H1 (cell line): ENCODE measurements at regions of chr14 and their contacts with region 1.

Region 1: GRCh38 chr14:77023001-77023996 is 5.2 kb downstream of the IRF2BPL start:
- DNase-seq: peak in 1 of 2 experiments; percentile 51
- H3K4me3 ChIP-seq: peak overlapping the region in 1 of 4 experiments; percentile 86; a peak in 4 of 8 replicates
- H3K27ac ChIP-seq: peak overlapping the region; percentile 35; the same call in 1 of the 2 replicates
- H3K4me1 ChIP-seq: peaks cover 12 to 26% (median 19%) of the 10 kb centered on the region in 4 experiments
- H3K27me3 ChIP-seq: peaks cover 0 to 5% (median 3%) of the 10 kb centered on the region in 4 experiments; a peak in 5 of 7 replicates
- CTCF ChIP-seq: peak in 2 of 3 experiments; percentile 18 to 42; a peak in 3 of 4 replicates
- EP300 ChIP-seq: no peak
- POLR2A ChIP-seq: no peak; a peak in 1 of 3 replicates
- RAD21 ChIP-seq: peak; percentile 47 to 53

Region 2: DNA sequence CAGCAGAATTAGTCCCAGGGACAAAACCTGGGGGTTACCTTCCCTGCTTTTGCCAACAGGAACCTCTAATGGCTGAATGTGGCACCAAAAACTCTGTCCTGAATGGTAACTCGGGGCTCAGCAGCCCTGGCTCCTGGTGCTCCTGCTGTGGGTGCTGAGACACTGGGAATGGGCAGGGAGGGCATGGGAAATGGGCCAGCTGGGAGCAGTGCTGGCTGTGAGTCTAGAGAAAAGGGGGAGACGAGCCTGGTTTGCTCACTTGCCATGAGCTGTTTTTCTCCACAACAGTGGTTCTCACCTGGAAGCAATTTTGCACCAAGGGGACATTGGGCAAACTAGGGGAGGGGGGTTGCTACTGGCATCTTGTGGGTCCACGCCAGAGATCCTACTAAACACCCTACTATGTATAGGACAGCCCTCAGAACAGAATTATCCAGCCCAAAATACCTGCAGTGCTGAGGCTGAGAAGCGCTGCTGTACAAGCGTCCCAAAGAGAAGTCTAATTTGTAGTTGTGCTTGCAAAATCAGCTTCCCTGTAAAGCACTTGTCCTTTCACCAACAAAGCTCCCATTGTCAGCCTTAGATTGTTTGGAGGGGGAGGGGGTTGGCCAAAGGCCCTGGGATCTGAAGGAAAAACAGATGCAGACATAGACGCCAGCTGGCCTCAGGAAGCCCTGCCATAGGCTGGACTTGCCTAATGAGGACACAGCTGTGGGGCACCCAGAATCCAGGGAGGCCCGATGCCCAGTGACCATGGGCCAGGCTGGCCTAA is 193.5 kb before region 1 on chr14:
- CTCF ChIA-PET with region 1: no interaction called
- POLR2A ChIA-PET with region 1: no interaction called
- DNase-seq: no peak
- H3K4me3 ChIP-seq: no peak overlapping the region
- H3K27ac ChIP-seq: no peak overlapping the region
- H3K4me1 ChIP-seq: peaks cover 3 to 22% (median 10%) of the 10 kb centered on the region in 4 experiments
- H3K27me3 ChIP-seq: no peaks in the 10 kb centered on the region
- CTCF ChIP-seq: no peak
- EP300 ChIP-seq: no peak
- POLR2A ChIP-seq: no peak
- RAD21 ChIP-seq: no peak

Region 3: DNA sequence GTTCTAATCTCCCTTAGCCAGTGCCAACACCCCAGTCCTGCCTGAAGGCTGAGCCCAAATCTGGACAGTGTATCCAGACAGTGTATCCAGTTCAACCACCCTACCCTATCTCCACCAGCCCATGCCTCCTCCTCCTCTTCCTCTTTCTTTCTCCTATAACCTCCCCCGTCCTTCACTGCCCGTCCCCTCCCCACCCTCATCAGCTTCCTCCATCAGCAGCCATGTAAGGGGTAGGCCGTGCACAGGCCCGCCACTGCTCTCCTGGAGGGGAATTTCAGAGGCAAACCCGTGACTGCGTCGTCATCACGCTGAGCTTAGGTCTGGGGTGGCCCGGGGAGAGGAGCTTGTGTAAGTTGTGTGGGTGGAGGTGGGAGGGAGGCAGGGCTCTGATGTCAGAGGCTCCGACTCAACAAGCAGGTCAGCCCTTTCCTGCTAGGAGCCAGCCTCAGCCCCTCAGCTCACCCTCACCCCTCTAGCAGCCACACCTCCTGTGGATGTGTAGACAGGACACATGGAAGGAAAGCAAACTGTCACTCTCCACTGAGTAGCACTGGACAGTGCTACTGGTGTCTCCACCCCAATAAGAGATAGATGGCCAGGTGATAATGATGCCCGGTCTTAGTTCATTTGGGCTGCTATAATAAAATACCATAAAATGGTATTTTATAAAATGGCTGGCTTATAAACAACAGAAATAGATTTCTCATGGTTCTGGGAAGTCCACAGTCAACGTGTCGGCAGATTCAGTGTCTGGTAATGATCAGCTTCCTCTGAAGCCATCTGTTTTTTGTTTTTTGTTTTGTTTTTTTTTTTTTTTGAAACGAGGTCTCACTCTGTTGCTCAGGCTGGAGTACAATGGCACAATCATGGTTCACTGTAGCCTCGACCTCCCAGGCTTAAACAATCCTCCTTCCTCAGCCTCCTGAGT is 45.2 kb before region 1 on chr14:
- CTCF ChIA-PET with region 1: interaction called, 10 read pairs
- POLR2A ChIA-PET with region 1: no interaction called
- DNase-seq: peak in 1 of 2 experiments; percentile 48
- H3K4me3 ChIP-seq: no peak overlapping the region
- H3K27ac ChIP-seq: no peak overlapping the region
- H3K4me1 ChIP-seq: peaks cover 0 to 10% (median 2%) of the 10 kb centered on the region in 4 experiments; a peak in 4 of 7 replicates
- H3K27me3 ChIP-seq: no peaks in the 10 kb centered on the region
- CTCF ChIP-seq: no peak
- EP300 ChIP-seq: no peak
- POLR2A ChIP-seq: no peak
- RAD21 ChIP-seq: no peak

Region 4: DNA sequence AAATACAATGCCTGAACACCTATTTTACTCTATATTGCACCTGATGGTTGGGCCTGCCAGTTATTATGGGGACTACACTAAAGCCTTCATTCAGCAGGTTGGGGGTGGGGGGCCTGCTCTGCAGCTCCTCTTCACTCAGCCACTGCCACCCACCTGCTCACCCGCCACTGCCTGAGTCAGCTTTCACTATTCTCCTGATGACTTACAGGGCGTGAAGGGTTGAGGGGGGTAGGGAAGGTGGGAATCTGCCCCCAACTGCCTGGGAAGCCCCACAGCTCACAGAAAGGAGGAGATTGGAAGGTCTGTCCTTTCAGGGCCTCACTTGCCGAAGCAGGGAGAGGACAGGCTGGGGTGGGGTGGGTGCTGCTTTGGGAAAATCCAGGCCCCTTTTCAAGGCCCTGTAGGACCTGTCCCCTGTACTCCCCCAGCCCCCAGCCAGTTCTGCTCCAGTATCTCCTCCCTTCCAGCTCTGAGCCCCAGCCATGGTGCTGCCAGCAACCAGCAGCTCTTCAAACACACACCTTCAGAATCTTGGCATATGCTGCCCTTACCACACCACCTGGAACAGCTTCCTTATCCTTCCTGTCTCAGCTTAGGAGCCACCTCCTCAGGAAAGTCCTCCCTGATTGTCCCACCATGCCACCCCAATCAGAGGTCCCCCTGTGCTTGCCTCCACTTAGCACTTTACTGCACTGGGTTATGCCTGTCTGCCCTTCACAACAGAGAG is 27.9 kb before region 1 on chr14:
- CTCF ChIA-PET with region 1: interaction called, 11 read pairs
- POLR2A ChIA-PET with region 1: interaction called, 6 read pairs
- DNase-seq: peak in 1 of 2 experiments; percentile 52
- H3K4me3 ChIP-seq: no peak overlapping the region
- H3K27ac ChIP-seq: no peak overlapping the region
- H3K4me1 ChIP-seq: peaks cover 13 to 26% (median 17%) of the 10 kb centered on the region in 4 experiments
- H3K27me3 ChIP-seq: peaks cover 0 to 1% (median 0%) of the 10 kb centered on the region in 4 experiments; a peak in 1 of 7 replicates
- CTCF ChIP-seq: no peak
- EP300 ChIP-seq: no peak
- POLR2A ChIP-seq: no peak
- RAD21 ChIP-seq: no peak

Region 5: DNA sequence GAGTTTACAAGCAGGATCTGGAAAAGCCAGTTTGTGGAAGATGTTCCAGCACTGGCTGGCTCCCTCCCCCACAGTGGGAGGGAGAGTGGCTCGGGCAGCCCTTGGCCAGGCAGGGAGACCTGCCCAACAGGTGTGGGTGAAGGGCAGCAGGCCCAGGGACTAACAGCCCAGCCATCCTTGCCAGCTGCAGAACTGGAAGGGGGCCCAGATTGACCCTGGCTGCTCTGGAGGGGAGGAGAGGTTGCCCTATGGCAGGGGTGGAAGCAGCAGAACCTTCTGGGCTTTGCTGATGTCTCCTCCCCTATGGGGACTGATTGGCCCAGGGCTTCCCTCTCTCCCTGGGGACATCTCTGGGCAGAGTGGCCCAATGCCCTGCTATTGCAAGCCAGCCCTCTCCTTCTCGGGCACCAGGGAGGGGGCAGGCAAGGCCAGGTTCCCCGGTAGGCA is 15.3 kb before region 1 on chr14:
- CTCF ChIA-PET with region 1: interaction called, 25 read pairs
- POLR2A ChIA-PET with region 1: interaction called, 15 read pairs
- DNase-seq: no peak
- H3K4me3 ChIP-seq: no peak overlapping the region
- H3K27ac ChIP-seq: no peak overlapping the region
- H3K4me1 ChIP-seq: peaks cover 8 to 31% (median 15%) of the 10 kb centered on the region in 4 experiments; a peak in 6 of 7 replicates
- H3K27me3 ChIP-seq: no peaks in the 10 kb centered on the region
- CTCF ChIP-seq: no peak
- EP300 ChIP-seq: no peak
- POLR2A ChIP-seq: no peak
- RAD21 ChIP-seq: no peak

Region 6: DNA sequence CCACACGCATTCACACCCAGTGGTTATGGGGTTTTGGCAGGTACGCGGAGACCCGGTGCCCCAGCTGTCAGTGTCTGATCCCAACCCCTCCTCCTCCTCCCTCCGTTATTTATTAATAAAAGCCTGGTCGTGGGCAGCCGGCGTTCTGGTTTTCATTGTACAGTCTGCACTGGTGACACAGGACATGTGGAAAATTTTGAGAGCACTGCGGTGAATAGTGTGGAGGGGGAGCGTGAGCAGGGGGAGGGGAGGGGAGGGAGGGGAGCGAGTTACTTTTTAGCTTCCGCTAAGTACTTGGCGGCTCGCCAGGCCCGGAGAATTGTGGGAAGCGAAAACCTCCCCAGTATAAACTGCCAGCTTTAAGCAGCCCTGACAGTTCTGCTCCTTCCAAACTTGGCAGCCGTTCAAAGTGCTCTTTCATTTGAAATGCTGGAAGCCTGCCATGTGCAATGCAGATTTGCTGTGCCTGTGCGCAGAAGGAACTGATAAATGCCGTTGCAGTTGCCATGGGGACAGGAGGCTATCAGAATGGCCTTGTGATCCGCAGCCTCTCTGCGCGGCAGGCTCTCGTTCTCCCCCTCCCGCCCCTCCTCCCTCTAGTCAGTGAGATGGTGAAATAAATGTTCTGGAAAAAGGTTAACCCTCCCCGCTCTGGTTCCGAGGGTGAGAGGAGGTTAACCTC is 16.9 kb after region 1 on chr14:
- CTCF ChIA-PET with region 1: interaction called, 13 read pairs
- POLR2A ChIA-PET with region 1: interaction called, 92 read pairs
- DNase-seq: peak in 1 of 2 experiments; percentile 80
- H3K4me3 ChIP-seq: peak overlapping the region; percentile 22 to 58 (median 52); a peak in 7 of 8 replicates
- H3K27ac ChIP-seq: no peak overlapping the region
- H3K4me1 ChIP-seq: peaks cover 33 to 65% (median 41%) of the 10 kb centered on the region in 4 experiments; a peak in 6 of 7 replicates
- H3K27me3 ChIP-seq: peaks cover 0 to 4% (median 2%) of the 10 kb centered on the region in 4 experiments; a peak in 2 of 7 replicates
- CTCF ChIP-seq: no peak
- EP300 ChIP-seq: no peak; a peak in 1 of 3 replicates
- POLR2A ChIP-seq: no peak
- RAD21 ChIP-seq: no peak

Region 7: GRCh38 chr14:77059276-77059915 is 36.1 kb after region 1 on chr14:
- CTCF ChIA-PET with region 1: interaction called, 15 read pairs
- POLR2A ChIA-PET with region 1: interaction called, 4 read pairs
- DNase-seq: no peak
- H3K4me3 ChIP-seq: no peak overlapping the region
- H3K27ac ChIP-seq: no peak overlapping the region
- H3K4me1 ChIP-seq: peaks cover 3 to 12% (median 4%) of the 10 kb centered on the region in 4 experiments; a peak in 5 of 7 replicates
- H3K27me3 ChIP-seq: no peaks in the 10 kb centered on the region
- CTCF ChIP-seq: peak; percentile 46 to 60 (median 55)
- EP300 ChIP-seq: no peak
- POLR2A ChIP-seq: no peak
- RAD21 ChIP-seq: peak; percentile 47 to 56; a peak in 3 of 4 replicates